Naive thymus-derived CD4-positive, alpha-beta T cell (primary cell): ENCODE measurements at regions of chr22 and their contacts with region 1.

Region 1: DNA sequence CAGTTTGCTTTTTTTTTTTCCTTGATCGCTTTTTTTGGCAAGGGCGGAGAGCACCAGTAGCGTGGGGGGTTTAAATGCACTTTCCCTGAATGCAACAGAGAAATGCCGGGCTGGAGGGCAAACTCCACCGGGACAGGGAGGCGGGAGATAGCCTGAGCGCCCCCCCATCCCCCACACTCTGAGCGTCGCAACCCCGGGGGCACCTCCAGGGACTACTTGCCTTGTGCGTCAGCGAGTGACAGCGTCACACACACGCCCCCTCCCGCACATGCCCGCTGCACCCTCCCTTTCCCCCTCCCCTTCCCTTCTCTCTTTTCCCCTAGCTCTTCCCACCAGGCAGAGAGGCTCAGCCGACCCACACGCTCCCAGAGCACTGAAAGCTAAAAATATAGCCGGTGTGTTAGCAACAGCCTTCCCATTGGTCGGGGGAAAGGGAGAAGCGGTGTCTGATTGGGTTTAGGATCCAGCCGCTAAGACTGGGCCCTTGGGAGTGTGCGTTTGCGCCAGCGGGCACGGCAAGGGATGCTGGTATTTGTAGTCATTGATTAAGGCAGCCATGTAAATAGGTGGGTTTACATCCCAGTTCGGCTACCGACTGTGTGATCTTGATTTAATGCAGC is 1.7 kb upstream of the TOB2 start:
- DNase-seq: peak; percentile 62 to 95 (median 92)
- ATAC-seq: peak; percentile 78
- H3K4me3 ChIP-seq: peak overlapping the region; percentile 90
- H3K4me3 Mint-ChIP-seq: peak overlapping the region; percentile 92 to 98 (median 94)
- H3K27ac ChIP-seq: peak overlapping the region; percentile 88
- H3K27ac Mint-ChIP-seq: peak overlapping the region; percentile 91 to 99 (median 94)
- H3K4me1 ChIP-seq: peaks cover 7% of the 10 kb centered on the region in 2 donors
- H3K4me1 Mint-ChIP-seq: peaks cover 6 to 25% (median 21%) of the 10 kb centered on the region in 7 donors
- H3K27me3 ChIP-seq: no peaks in the 10 kb centered on the region
- H3K27me3 Mint-ChIP-seq: no peaks in the 10 kb centered on the region

Region 2: GRCh38 chr22:40636380-40637182 is 811.7 kb before region 1 on chr22 and contains the start of gene MRTFA:
- CTCF ChIA-PET with region 1: no interaction called
- POLR2A ChIA-PET with region 1: no interaction called
- intact Hi-C with region 1: loop called in 1 of 2 experiments (anchors 5 kb)
- DNase-seq: peak; percentile 90 to 99 (median 98)
- ATAC-seq: peak; percentile 96
- H3K4me3 ChIP-seq: peak within 1 kb of the TSS; percentile 84
- H3K4me3 Mint-ChIP-seq: peak within 1 kb of the TSS; percentile 94 to 100 (median 97)
- H3K27ac ChIP-seq: peak within 1 kb of the TSS; percentile 85
- H3K27ac Mint-ChIP-seq: peak within 1 kb of the TSS; percentile 96 to 99 (median 97)
- H3K4me1 ChIP-seq: peaks cover 14 to 27% of the 10 kb centered on the region in 2 donors
- H3K4me1 Mint-ChIP-seq: peaks cover 27 to 56% (median 44%) of the 10 kb centered on the region in 7 donors
- H3K27me3 ChIP-seq: no peaks in the 10 kb centered on the region
- H3K27me3 Mint-ChIP-seq: no peaks in the 10 kb centered on the region
- total RNA-seq, gene MRTFA: 64.0 to 114 (median 104) TPM

Region 3: DNA sequence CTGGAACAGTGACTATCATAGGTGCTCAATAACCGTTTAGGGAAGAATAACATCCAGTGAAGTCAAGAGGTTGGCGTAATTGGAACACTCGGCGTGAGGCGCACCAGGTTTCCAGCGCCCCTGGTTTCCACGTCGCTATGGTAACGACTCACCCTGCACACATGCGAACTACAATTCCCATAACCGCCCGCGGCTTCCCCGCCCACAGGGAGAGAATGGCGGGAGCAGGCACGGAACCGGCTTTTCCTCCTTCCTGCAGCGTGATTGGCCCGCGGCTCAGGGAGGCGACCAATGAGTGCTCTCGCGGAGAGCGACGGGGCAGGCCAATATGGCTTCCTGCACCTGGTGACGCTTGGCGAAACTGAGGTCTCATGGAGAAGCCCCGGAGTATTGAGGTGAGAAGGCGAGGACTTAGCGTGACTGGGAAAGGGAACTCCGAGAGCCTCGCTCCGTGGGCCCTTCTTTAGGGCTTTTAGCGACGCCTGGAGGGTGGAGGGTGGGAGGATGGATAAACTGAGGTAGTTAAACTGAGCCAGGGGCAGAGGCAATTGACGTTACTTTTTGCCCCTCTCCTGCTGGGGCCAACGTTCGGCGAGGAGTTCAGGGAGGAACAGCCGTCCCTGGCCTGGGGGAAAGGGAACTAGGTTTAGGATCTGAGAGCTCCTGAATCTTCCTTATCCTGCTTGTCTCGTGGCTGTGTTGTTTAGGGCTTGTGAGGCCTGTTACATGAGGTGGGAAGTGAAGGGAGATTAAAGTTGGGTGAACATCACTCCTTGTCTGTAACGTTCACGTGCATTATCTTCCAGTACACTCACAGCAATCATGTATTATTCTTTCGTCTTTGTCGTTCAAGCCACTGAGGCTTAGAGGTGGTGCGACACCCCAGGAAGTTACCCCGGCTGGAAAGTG is 243.1 kb before region 1 on chr22 and contains the start of gene L3MBTL2:
- CTCF ChIA-PET with region 1: no interaction called
- POLR2A ChIA-PET with region 1: no interaction called
- intact Hi-C with region 1: loop called in 1 of 2 experiments (anchors 5 kb)
- DNase-seq: peak; percentile 89 to 99 (median 97)
- ATAC-seq: peak; percentile 100
- H3K4me3 ChIP-seq: peak within 1 kb of the TSS; percentile 94
- H3K4me3 Mint-ChIP-seq: peak within 1 kb of the TSS; percentile 87 to 100 (median 96)
- H3K27ac ChIP-seq: peak within 1 kb of the TSS; percentile 85
- H3K27ac Mint-ChIP-seq: peak within 1 kb of the TSS; percentile 88 to 98 (median 92)
- H3K4me1 ChIP-seq: peaks cover 4 to 10% of the 10 kb centered on the region in 2 donors
- H3K4me1 Mint-ChIP-seq: peaks cover 10 to 40% (median 36%) of the 10 kb centered on the region in 7 donors
- H3K27me3 ChIP-seq: no peaks in the 10 kb centered on the region
- H3K27me3 Mint-ChIP-seq: peaks cover 0 to 26% (median 0%) of the 10 kb centered on the region in 5 donors
- total RNA-seq, gene L3MBTL2: 31.6 to 45.9 (median 43.3) TPM

Region 4: DNA sequence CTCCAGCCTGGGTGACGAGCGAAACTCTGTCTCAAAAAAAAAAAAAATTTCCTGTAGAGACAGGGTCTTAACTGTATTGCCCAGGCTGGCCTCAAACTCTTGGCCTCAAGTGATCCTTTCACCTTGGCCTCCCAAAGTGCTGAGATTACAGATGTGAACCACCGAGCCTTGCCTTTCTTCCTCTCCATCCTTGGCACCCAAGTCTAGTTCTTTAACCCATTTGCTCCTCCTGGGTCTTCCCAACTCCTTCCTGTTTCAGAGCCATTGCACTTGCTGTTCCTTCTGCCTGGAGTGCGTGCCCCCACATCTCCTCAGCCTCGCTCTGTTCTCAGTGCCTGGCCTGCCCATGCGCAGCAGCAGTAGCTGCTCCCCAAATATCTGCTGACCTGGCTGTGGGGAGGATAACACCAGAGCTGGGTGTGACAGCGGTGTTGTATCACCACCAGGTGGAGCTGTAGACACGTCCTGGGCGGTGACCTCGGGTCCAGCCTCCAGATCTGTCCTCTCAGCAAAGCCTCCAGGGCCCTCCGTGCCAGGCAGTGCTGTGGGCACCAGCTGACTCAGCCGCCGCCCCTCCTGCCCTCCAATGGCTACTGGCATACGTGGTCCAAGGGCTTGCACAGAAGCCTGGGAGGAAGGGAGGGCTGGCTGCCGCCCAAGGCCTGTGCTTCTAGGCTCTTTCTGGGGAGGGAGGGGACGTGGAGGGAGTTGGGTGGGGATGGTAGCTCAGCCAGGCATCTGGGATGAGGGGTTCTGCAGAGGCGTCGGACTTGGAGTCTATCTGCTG is 44.6 kb before region 1 on chr22:
- CTCF ChIA-PET with region 1: interaction called, 4 read pairs
- POLR2A ChIA-PET with region 1: interaction called, 6 read pairs
- intact Hi-C with region 1: loop called in 1 of 2 experiments (anchors 1 kb)
- DNase-seq: peak; percentile 60 to 83 (median 79)
- ATAC-seq: peak; percentile 100
- H3K4me3 ChIP-seq: no peak overlapping the region
- H3K4me3 Mint-ChIP-seq: peak overlapping the region in 2 of 10 donors; percentile 4 to 65
- H3K27ac ChIP-seq: peak overlapping the region; percentile 26
- H3K27ac Mint-ChIP-seq: peak overlapping the region in 5 of 9 donors; percentile 3 to 76 (median 6)
- H3K4me1 ChIP-seq: peaks cover 0 to 7% of the 10 kb centered on the region in 2 donors
- H3K4me1 Mint-ChIP-seq: peaks cover 2 to 11% (median 4%) of the 10 kb centered on the region in 7 donors
- H3K27me3 ChIP-seq: no peaks in the 10 kb centered on the region
- H3K27me3 Mint-ChIP-seq: no peaks in the 10 kb centered on the region

Region 5: DNA sequence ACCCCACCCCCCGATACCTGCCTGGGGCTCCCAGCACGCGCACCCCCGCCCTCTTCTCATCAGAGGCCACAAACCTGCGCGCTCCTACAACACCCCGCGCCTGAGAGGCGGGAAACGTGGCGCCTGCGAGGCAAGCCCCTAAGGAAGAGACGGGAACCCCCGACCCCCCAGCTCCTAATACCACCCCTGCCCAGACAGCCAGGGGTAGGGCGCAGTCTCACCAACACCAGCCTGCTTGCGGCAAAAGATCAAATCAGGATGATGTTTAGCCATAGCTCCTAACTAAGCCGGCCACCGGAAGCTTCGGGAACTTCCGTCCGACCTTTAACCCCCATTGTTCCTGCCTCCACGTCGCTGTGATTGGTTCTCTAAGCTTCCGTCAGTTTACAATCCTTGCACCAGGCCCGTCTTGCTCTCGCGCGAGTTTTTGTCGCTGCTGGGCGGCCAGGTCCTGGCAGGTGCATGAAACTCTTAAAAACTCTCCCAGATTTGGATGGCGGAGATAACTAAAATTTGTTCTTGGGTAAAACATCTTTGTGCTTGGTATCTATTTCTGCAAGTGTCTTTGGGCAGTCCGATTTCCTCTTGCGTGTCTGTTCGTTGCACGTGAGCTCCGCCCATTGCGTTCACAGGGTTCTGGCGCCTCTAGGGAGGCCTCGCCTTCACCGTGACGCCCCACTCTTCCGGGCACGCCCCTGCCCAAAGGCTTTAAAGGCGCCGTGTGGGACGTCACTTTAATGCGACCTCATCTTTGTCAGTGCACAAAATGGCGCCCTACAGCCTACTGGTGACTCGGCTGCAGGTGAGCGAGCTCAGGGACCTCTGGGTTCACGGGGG is 20.3 kb after region 1 on chr22 and contains the starts of genes ACO2 and PHF5A:
- CTCF ChIA-PET with region 1: interaction called, 5 read pairs
- POLR2A ChIA-PET with region 1: interaction called, 143 read pairs
- intact Hi-C with region 1: loop called (anchors 1 kb)
- DNase-seq: peak; percentile 93 to 99 (median 98)
- ATAC-seq: peak; percentile 96
- H3K4me3 ChIP-seq: peak within 1 kb of the TSS; percentile 76
- H3K4me3 Mint-ChIP-seq: peak within 1 kb of the TSS; percentile 88 to 94 (median 91)
- H3K27ac ChIP-seq: peak within 1 kb of the TSS; percentile 89
- H3K27ac Mint-ChIP-seq: peak within 1 kb of the TSS; percentile 98 to 100 (median 99)
- H3K4me1 ChIP-seq: peaks cover 19 to 20% of the 10 kb centered on the region in 2 donors
- H3K4me1 Mint-ChIP-seq: peaks cover 18 to 75% (median 59%) of the 10 kb centered on the region in 7 donors
- H3K27me3 ChIP-seq: no peaks in the 10 kb centered on the region
- H3K27me3 Mint-ChIP-seq: no peaks in the 10 kb centered on the region
- total RNA-seq, gene ACO2: 64.5 to 84.8 (median 70.3) TPM
- total RNA-seq, gene PHF5A: 27.8 to 63.9 (median 36.0) TPM

Region 6: DNA sequence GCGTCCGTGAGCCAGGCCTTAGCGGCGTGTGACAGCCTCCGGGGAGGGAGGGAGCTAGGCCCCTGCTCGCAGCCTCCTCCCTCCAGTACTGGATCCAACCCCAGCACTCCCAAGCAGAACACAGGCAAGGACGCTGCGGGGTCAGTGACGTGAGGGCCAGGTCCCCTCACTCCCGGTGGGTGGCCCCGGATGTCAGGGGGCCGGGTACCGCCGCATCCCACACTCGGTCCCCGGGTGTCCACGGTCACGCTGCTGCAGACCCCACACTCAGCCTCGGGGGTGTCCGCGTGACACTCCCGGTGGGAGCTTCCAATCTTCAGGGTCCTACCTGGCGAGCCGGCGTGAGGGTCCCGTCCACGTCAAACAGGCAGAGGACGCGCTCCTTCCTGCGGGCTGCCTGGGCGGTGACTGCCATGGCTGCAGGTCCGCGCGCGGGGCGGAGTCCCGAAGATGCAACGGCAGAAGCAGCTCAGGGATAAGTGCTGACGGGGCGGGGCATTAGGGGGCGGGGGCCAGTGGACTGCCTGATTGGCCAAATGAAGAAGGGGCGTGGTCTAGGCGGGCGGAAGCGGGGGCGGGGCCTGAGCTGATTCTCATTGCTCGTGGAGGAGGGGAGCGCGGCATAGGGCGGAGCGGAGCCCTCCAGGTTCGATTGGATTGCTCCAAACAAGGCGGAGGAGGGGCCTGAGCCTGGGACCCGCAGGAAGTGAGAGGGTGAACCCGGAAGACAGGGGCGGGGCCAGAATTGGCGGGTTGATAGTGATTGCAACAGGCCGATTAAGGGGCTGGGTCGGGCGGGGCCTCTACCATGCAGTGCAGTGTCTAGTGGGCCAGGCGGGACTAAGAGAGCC is 141.3 kb after region 1 on chr22 and contains the start of gene PMM1:
- CTCF ChIA-PET with region 1: no interaction called
- POLR2A ChIA-PET with region 1: interaction called, 16 read pairs
- intact Hi-C with region 1: loop called (anchors 1 kb)
- DNase-seq: peak; percentile 97 to 100 (median 100)
- ATAC-seq: peak; percentile 99
- H3K4me3 ChIP-seq: peak within 1 kb of the TSS; percentile 97
- H3K4me3 Mint-ChIP-seq: peak within 1 kb of the TSS; percentile 76 to 96 (median 93)
- H3K27ac ChIP-seq: peak within 1 kb of the TSS; percentile 79
- H3K27ac Mint-ChIP-seq: peak within 1 kb of the TSS; percentile 81 to 93 (median 86)
- H3K4me1 ChIP-seq: peaks cover 9 to 11% of the 10 kb centered on the region in 2 donors
- H3K4me1 Mint-ChIP-seq: peaks cover 5 to 28% (median 22%) of the 10 kb centered on the region in 7 donors
- H3K27me3 ChIP-seq: no peaks in the 10 kb centered on the region
- H3K27me3 Mint-ChIP-seq: no peaks in the 10 kb centered on the region
- total RNA-seq, gene PMM1: 22.5 to 34.3 (median 26.9) TPM

Region 7: GRCh38 chr22:41946629-41947423 is 498.5 kb after region 1 on chr22 and contains the start of gene CENPM:
- CTCF ChIA-PET with region 1: no interaction called
- POLR2A ChIA-PET with region 1: no interaction called
- intact Hi-C with region 1: loop called in 1 of 2 experiments (anchors 10 kb)
- DNase-seq: peak; percentile 71 to 94 (median 84)
- ATAC-seq: peak; percentile 97
- H3K4me3 ChIP-seq: peak within 1 kb of the TSS; percentile 82
- H3K4me3 Mint-ChIP-seq: peak within 1 kb of the TSS; percentile 83 to 93 (median 91)
- H3K27ac ChIP-seq: peak within 1 kb of the TSS; percentile 37
- H3K27ac Mint-ChIP-seq: peak within 1 kb of the TSS in 7 of 9 donors; percentile 63 to 93 (median 68)
- H3K4me1 ChIP-seq: peaks cover 3 to 13% of the 10 kb centered on the region in 2 donors
- H3K4me1 Mint-ChIP-seq: peaks cover 0 to 41% (median 10%) of the 10 kb centered on the region in 7 donors
- H3K27me3 ChIP-seq: no peaks in the 10 kb centered on the region
- H3K27me3 Mint-ChIP-seq: no peaks in the 10 kb centered on the region
- total RNA-seq, gene CENPM: 5.1 to 51.1 (median 10.8) TPM